ENCODE measurements at regions of chr7 and their contacts with region 1.

Region 1: GRCh38 chr7:90262438-90262837 is 17.5 kb downstream of the CFAP69 start:
- DNase-seq: no peak
- H3K4me3 Mint-ChIP-seq: no peak overlapping the region
- H3K27ac Mint-ChIP-seq: no peak overlapping the region
- H3K4me1 Mint-ChIP-seq: no peaks in the 10 kb centered on the region
- H3K27me3 Mint-ChIP-seq: peaks cover 9% of the 10 kb centered on the region

Region 2: GRCh38 chr7:90155206-90155605 is 107.2 kb before region 1 on chr7:
- intact Hi-C with region 1: loop called (anchors 1 kb)
- DNase-seq: no peak
- H3K4me3 Mint-ChIP-seq: peak overlapping the region; percentile 67
- H3K27ac Mint-ChIP-seq: no peak overlapping the region
- H3K4me1 Mint-ChIP-seq: peaks cover 4% of the 10 kb centered on the region
- H3K27me3 Mint-ChIP-seq: peaks cover 22% of the 10 kb centered on the region

Region 3: GRCh38 chr7:90433221-90433620 is 170.8 kb after region 1 on chr7:
- intact Hi-C with region 1: no loop called
- DNase-seq: no peak
- H3K4me3 Mint-ChIP-seq: no peak overlapping the region
- H3K27ac Mint-ChIP-seq: no peak overlapping the region
- H3K4me1 Mint-ChIP-seq: no peaks in the 10 kb centered on the region
- H3K27me3 Mint-ChIP-seq: peaks cover 4% of the 10 kb centered on the region